Dendritic cell treated with granulocyte-macrophage colony-stimulating factor and Interleukin-4, amounts not matched to agents 40 ng/mL and 50 ng/mL, for 4 days (primary cell): ENCODE measurements at regions of chr1 and their contacts with region 1.

Region 1: DNA sequence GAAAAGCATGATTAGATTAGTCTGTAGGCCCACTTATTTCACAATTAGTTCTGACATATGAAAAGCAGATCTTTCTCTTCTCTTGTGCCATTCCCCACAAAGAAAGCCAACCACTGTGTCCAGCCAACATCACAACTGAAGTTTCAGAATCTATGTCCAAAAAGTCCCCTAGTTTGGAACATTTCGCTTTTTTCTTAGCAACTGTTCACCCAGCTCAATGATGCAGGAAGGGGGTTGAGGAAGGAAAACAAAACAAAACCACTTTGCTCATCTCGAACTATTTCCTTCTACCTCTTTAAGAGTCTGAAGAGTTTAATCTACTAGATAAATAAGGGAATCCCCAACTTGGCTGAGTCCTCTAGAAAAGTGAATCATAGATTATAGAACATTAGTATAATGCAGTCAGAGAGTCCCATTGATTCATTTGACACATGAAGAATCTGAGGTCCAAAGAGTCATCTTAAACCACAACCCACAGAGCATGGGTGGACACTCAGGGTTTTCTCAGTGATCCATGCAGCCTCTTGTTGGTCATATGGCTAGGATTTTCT is 159.3 kb upstream of the SGIP1 start:
- H3K4me3 Mint-ChIP-seq: no peak overlapping the region
- H3K27ac Mint-ChIP-seq: no peak overlapping the region
- H3K4me1 Mint-ChIP-seq: peaks cover 48% of the 10 kb centered on the region
- H3K27me3 Mint-ChIP-seq: peaks cover 11% of the 10 kb centered on the region

Region 2: GRCh38 chr1:66258404-66259105 is 116.1 kb before region 1 on chr1:
- intact Hi-C with region 1: loop called (anchors 5 kb)
- H3K4me3 Mint-ChIP-seq: no peak overlapping the region
- H3K27ac Mint-ChIP-seq: no peak overlapping the region
- H3K4me1 Mint-ChIP-seq: peaks cover 26% of the 10 kb centered on the region
- H3K27me3 Mint-ChIP-seq: no peaks in the 10 kb centered on the region

Region 3: GRCh38 chr1:66563094-66563800 is 188.6 kb after region 1 on chr1:
- intact Hi-C with region 1: no loop called
- H3K4me3 Mint-ChIP-seq: no peak overlapping the region
- H3K27ac Mint-ChIP-seq: no peak overlapping the region
- H3K4me1 Mint-ChIP-seq: peaks cover 19% of the 10 kb centered on the region
- H3K27me3 Mint-ChIP-seq: no peaks in the 10 kb centered on the region